Ascending aorta (tissue), 2 donors: ENCODE measurements at regions of chr14 and their contacts with region 1.

Region 1: GRCh38 chr14:92513204-92513973 is at the start of gene RIN3:
- DNase-seq: peak in 1 of 2 donors; percentile 80
- H3K4me3 ChIP-seq: peak within 1 kb of the TSS; percentile 68 to 71
- H3K27ac ChIP-seq: peak within 1 kb of the TSS; percentile 81 to 84
- H3K4me1 ChIP-seq: peaks cover 3 to 18% of the 10 kb centered on the region in 2 donors
- H3K27me3 ChIP-seq: no peaks in the 10 kb centered on the region
- CTCF ChIP-seq: no peak
- total RNA-seq, gene RIN3: 30.3 TPM

Region 2: DNA sequence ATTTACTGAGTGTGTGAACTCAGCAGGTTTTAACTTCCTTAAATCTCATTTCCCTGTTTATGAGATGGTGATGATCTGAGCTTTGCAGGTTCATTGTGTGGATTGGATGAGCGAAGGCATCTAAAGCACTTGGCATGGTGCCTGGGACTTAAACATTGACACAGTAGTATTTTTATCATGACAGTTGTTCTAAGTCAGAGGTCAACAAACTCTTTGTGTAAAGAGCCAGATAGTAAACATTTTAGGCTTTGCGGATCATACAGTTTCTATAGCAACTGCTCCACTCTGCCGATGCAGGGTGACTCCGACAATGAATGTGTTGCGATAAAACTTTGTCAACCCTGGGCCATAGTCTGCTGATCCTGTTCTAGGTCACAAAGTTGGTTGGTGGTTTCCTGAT is 165.2 kb before region 1 on chr14:
- intact Hi-C with region 1: no loop called
- DNase-seq: no peak
- H3K4me3 ChIP-seq: no peak overlapping the region
- H3K27ac ChIP-seq: no peak overlapping the region
- H3K4me1 ChIP-seq: no peaks in the 10 kb centered on the region
- H3K27me3 ChIP-seq: no peaks in the 10 kb centered on the region
- CTCF ChIP-seq: no peak

Region 3: DNA sequence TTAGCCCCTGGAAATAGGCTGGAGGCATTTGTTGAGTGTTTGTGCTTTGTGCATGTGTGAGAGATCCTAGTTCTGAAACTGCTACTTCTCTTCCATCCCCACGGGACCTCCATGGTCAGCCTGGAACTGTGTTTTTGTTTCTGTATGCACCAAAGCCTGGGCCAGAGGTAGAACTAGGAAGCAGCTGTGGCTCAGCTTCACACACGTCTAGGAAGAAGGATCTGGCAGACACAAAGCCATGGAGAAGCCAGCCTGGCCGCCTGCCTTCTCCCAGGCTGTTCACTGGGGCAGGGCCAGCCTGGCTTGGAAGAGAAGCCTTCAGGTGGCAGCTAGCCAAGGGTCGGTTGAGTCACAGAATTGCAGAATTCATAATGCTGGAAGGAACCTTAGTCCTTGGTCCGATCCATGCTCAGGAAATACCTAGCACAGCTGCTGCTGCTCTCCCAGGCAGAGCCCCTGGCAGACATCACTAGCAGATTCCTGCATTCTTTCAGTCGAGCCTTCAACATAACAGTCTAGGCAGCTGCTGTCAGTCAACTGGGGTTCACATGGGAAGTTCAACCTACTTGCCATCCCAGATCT is 27.2 kb after region 1 on chr14:
- intact Hi-C with region 1: loop called (anchors 1 kb)
- DNase-seq: peak; percentile 78 to 98
- H3K4me3 ChIP-seq: no peak overlapping the region
- H3K27ac ChIP-seq: peak overlapping the region; percentile 91 to 92
- H3K4me1 ChIP-seq: peaks cover 9 to 18% of the 10 kb centered on the region in 2 donors
- H3K27me3 ChIP-seq: no peaks in the 10 kb centered on the region
- CTCF ChIP-seq: no peak

Region 4: GRCh38 chr14:92563359-92563758 is 50.0 kb after region 1 on chr14:
- intact Hi-C with region 1: no loop called
- DNase-seq: no peak
- H3K4me3 ChIP-seq: no peak overlapping the region
- H3K27ac ChIP-seq: peak overlapping the region; percentile 71 to 74
- H3K4me1 ChIP-seq: peaks cover 3 to 34% of the 10 kb centered on the region in 2 donors
- H3K27me3 ChIP-seq: no peaks in the 10 kb centered on the region
- CTCF ChIP-seq: no peak

Region 5: DNA sequence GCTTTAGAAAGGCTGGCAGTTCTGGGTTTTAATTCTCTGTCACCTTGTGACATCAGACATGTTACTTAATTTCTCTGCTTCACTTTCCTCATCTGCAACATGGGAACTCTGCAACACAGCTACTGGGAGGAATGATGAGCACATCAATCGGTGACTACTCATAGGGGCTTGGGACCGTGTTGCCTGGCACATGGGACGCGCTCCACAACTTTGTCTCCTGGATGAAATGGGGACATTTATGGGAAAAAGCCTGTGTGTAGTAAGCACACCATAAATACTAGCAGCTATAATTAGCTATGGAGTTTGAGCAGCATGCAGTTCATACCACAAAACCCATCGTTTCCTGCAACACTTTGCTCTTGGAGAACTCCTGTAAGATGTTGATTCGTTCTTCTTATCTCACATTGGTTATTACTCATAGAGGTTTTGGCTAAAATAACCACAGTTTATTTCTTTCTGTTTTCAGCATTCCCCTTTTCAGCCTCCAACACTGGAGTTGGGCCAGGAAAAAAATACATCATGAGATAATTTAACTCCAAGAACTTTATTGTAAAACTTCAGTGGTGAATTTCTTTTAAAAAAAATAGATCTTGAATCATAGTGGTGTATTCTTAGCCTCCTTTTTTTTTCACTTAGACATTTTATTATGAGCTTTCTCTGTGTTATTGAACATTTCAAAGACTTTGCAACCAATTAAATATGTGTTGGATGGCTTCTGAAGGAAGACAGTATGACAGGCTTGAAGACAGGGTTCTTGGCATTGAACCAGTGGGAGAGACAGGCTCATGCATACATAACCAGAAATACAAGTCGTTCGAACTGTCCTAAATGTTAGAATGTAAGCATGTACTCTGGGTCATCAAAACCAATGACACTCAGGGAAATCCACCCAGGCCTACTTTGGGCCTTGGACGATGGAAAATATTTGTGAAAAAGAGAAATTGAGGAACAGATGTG is 72.9 kb after region 1 on chr14:
- intact Hi-C with region 1: loop called (anchors 1 kb)
- DNase-seq: peak in 1 of 2 donors; percentile 92
- H3K4me3 ChIP-seq: no peak overlapping the region
- H3K27ac ChIP-seq: peak overlapping the region; percentile 91 to 95
- H3K4me1 ChIP-seq: peaks cover 13 to 51% of the 10 kb centered on the region in 2 donors
- H3K27me3 ChIP-seq: no peaks in the 10 kb centered on the region
- CTCF ChIP-seq: no peak

Region 6: GRCh38 chr14:92649935-92650545 is 136.7 kb after region 1 on chr14:
- intact Hi-C with region 1: loop called (anchors 2 kb)
- DNase-seq: peak; percentile 65 to 91
- H3K4me3 ChIP-seq: no peak overlapping the region
- H3K27ac ChIP-seq: peak overlapping the region; percentile 97
- H3K4me1 ChIP-seq: peaks cover 28 to 44% of the 10 kb centered on the region in 2 donors
- H3K27me3 ChIP-seq: no peaks in the 10 kb centered on the region
- CTCF ChIP-seq: no peak

Region 7: DNA sequence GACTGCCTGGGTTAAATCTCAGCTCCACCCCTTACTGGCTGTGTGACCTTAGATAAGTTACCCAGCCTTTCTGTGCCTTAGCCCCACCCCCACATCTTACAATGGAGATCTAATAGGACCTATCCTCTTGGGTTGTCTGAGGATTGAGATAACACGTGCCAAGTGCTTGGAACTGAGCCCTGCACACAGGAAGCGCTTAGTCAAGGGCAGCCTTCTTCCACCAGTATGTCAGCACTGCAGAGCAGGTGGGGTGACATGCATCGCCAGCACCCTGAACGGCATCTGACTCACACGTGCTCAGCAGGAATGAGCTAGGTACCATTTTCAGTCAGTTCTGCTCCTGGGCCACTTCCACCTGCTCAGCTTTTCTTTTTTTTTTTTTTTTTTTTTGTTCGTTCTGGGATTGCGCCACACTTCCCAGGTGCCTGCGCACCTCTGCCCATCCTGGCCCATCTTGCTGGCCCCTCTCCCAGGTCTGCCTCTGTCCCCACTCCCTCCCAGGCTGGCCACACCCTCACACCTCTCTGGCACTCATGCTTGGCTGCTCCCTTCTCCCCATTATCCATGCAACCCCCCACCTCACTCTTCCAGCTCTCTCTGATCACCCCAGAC is 215.5 kb after region 1 on chr14:
- intact Hi-C with region 1: no loop called
- DNase-seq: no peak
- H3K4me3 ChIP-seq: no peak overlapping the region
- H3K27ac ChIP-seq: no peak overlapping the region
- H3K4me1 ChIP-seq: peaks cover 0 to 3% of the 10 kb centered on the region in 2 donors
- H3K27me3 ChIP-seq: no peaks in the 10 kb centered on the region
- CTCF ChIP-seq: no peak

Region 8: DNA sequence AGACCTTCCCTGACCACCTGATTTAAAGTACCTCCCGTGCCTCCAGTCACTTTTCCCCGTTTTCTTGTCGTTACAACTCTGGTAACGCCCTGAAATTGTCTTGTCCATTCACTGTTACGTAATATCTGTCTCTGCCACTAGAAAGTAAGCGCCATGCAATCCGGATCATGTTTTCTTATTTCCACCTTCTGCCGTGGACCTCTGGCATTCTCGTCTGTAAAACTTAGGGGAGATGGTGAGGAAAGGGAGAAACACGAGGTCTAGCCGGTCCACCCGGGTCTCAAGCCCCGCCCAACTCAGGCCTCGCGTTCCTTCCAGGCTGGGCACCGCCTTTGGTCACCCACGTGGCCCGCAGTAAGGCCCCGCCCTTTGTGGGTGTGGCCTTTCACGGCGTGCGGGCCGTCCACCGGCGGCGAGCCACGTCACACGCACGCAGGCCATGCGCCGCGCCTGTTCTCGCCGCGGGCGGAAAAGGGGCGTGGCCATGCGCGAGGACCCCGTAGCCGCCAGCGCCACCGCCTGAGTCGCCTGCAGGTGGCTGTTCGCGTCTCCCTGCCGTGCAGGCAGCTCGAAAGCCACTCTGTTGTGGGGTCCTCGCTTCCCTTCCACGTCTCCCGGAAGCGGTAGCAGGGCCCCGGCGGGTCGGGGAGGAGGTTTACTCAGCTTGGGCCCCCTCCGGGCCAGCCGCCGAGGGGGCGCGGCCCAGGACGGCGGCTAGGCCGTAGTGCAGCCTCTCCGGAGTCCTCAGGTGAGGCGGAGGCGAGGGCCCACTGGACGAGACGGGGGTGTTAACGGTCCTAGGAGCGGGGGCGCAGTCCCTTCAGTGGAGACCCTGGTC is 280.5 kb after region 1 on chr14 and contains the start of gene GOLGA5:
- intact Hi-C with region 1: loop called (anchors 10 kb)
- DNase-seq: peak; percentile 88 to 99
- H3K4me3 ChIP-seq: peak within 1 kb of the TSS; percentile 80 to 98
- H3K27ac ChIP-seq: peak within 1 kb of the TSS; percentile 85 to 93
- H3K4me1 ChIP-seq: peaks cover 0 to 16% of the 10 kb centered on the region in 2 donors
- H3K27me3 ChIP-seq: no peaks in the 10 kb centered on the region
- CTCF ChIP-seq: peak; percentile 7 to 23 (median 15)
- total RNA-seq, gene GOLGA5: 26.3 TPM